B cell (primary cell): ENCODE measurements at regions of chr17 and their contacts with region 1.

Region 1: GRCh38 chr17:81294856-81295680 is at the start of gene SLC38A10:
- DNase-seq: peak; percentile 92
- ATAC-seq: peak; percentile 86
- H3K4me3 ChIP-seq: peak within 1 kb of the TSS; percentile 66 to 97 (median 91)
- H3K4me3 Mint-ChIP-seq: peak within 1 kb of the TSS; percentile 97
- H3K27ac ChIP-seq: peak within 1 kb of the TSS; percentile 75 to 94
- H3K27ac Mint-ChIP-seq: peak within 1 kb of the TSS; percentile 97
- H3K4me1 ChIP-seq: peaks cover 19 to 28% of the 10 kb centered on the region in 2 donors
- H3K4me1 Mint-ChIP-seq: peaks cover 43% of the 10 kb centered on the region
- H3K27me3 ChIP-seq: no peaks in the 10 kb centered on the region
- H3K27me3 Mint-ChIP-seq: no peaks in the 10 kb centered on the region
- CTCF ChIP-seq: no peak
- total RNA-seq, gene SLC38A10: 104 and 116 TPM in 2 replicates

Region 2: GRCh38 chr17:81346090-81346907 is 51.2 kb after region 1 on chr17:
- CTCF ChIA-PET with region 1: no interaction called
- POLR2A ChIA-PET with region 1: interaction called, 4 read pairs
- intact Hi-C with region 1: loop called (anchors 1 kb)
- DNase-seq: peak; percentile 93
- ATAC-seq: peak; percentile 94
- H3K4me3 ChIP-seq: peak overlapping the region in 4 of 5 experiments; percentile 41 to 61 (median 54)
- H3K4me3 Mint-ChIP-seq: peak overlapping the region; percentile 69
- H3K27ac ChIP-seq: no peak overlapping the region
- H3K27ac Mint-ChIP-seq: no peak overlapping the region
- H3K4me1 ChIP-seq: peaks cover 34 to 36% of the 10 kb centered on the region in 2 donors
- H3K4me1 Mint-ChIP-seq: peaks cover 21% of the 10 kb centered on the region
- H3K27me3 ChIP-seq: peaks cover 0 to 53% (median 32%) of the 10 kb centered on the region in 4 experiments
- H3K27me3 Mint-ChIP-seq: peaks cover 32% of the 10 kb centered on the region
- CTCF ChIP-seq: no peak

Region 3: GRCh38 chr17:81387100-81388090 is 92.3 kb after region 1 on chr17:
- CTCF ChIA-PET with region 1: no interaction called
- POLR2A ChIA-PET with region 1: no interaction called
- intact Hi-C with region 1: loop called (anchors 5 kb)
- DNase-seq: peak; percentile 75
- ATAC-seq: peak; percentile 60
- H3K4me3 ChIP-seq: peak overlapping the region; percentile 38 to 69 (median 57)
- H3K4me3 Mint-ChIP-seq: peak overlapping the region; percentile 83
- H3K27ac ChIP-seq: no peak overlapping the region
- H3K27ac Mint-ChIP-seq: no peak overlapping the region
- H3K4me1 ChIP-seq: peaks cover 11 to 14% of the 10 kb centered on the region in 2 donors
- H3K4me1 Mint-ChIP-seq: no peaks in the 10 kb centered on the region
- H3K27me3 ChIP-seq: peaks cover 0 to 77% (median 34%) of the 10 kb centered on the region in 4 experiments
- H3K27me3 Mint-ChIP-seq: peaks cover 46% of the 10 kb centered on the region
- CTCF ChIP-seq: no peak